Naive thymus-derived CD4-positive, alpha-beta T cell (primary cell): ENCODE measurements at regions of chr9 and their contacts with region 1.

Region 1: GRCh38 chr9:70406434-70406862 is 8.0 kb downstream of the KLF9 start:
- DNase-seq: peak in 3 of 9 donors; percentile 18 to 35 (median 28)
- ATAC-seq: peak; percentile 61
- H3K4me3 ChIP-seq: no peak overlapping the region
- H3K4me3 Mint-ChIP-seq: peak overlapping the region; percentile 61 to 87 (median 80)
- H3K27ac ChIP-seq: peak overlapping the region; percentile 46
- H3K27ac Mint-ChIP-seq: peak overlapping the region; percentile 71 to 96 (median 84)
- H3K4me1 ChIP-seq: peaks cover 32 to 64% of the 10 kb centered on the region in 2 donors
- H3K4me1 Mint-ChIP-seq: peaks cover 59 to 91% (median 83%) of the 10 kb centered on the region in 7 donors
- H3K27me3 ChIP-seq: no peaks in the 10 kb centered on the region
- H3K27me3 Mint-ChIP-seq: no peaks in the 10 kb centered on the region

Region 2: DNA sequence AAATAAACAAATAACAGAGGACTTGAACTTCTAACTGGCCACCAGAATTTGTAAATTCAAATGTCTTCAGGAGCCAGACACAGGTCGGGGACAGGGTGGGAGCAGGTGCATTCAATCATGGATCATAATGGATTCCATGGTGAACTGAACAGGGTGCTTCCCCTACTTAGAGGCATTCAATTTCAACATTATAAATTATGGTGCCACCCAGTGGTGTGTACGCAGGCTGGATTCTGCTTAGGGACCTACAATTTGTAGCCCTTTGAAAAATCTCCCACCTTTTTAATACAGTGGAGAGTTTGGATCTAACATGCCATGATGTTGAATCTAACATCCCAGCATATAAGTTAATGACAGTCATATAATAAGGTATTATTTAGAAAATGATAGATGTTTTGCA is 14.3 kb before region 1 on chr9:
- CTCF ChIA-PET with region 1: interaction called, 8 read pairs
- POLR2A ChIA-PET with region 1: interaction called, 15 read pairs
- intact Hi-C with region 1: loop called (anchors 1 to 2 kb)
- DNase-seq: no peak
- ATAC-seq: peak; percentile 64
- H3K4me3 ChIP-seq: no peak overlapping the region
- H3K4me3 Mint-ChIP-seq: peak overlapping the region in 8 of 10 donors; percentile 20 to 72 (median 46)
- H3K27ac ChIP-seq: no peak overlapping the region
- H3K27ac Mint-ChIP-seq: peak overlapping the region in 5 of 9 donors; percentile 4 to 76 (median 41)
- H3K4me1 ChIP-seq: peaks cover 13 to 64% of the 10 kb centered on the region in 2 donors
- H3K4me1 Mint-ChIP-seq: peaks cover 48 to 98% (median 88%) of the 10 kb centered on the region in 7 donors
- H3K27me3 ChIP-seq: no peaks in the 10 kb centered on the region
- H3K27me3 Mint-ChIP-seq: no peaks in the 10 kb centered on the region